Activated naive CD4-positive, alpha-beta T cell treated with anti-CD3 and anti-CD28 coated beads, Interleukin-2, amount 10 ng/mL, durations not matched to agents 7 days and 5 days (primary cell): ENCODE measurements at regions of chr7 and their contacts with region 1.

Region 1: GRCh38 chr7:26681819-26682418 is 182.5 kb downstream of the SKAP2 start:
- DNase-seq: no peak
- H3K4me3 Mint-ChIP-seq: no peak overlapping the region
- H3K27ac Mint-ChIP-seq: no peak overlapping the region
- H3K4me1 Mint-ChIP-seq: no peaks in the 10 kb centered on the region
- H3K27me3 Mint-ChIP-seq: peaks cover 6% of the 10 kb centered on the region

Region 2: GRCh38 chr7:26471306-26472075 is 210.4 kb before region 1 on chr7:
- CTCF ChIA-PET with region 1: no interaction called
- DNase-seq: no peak
- H3K4me3 Mint-ChIP-seq: no peak overlapping the region
- H3K27ac Mint-ChIP-seq: no peak overlapping the region
- H3K4me1 Mint-ChIP-seq: no peaks in the 10 kb centered on the region
- H3K27me3 Mint-ChIP-seq: peaks cover 24% of the 10 kb centered on the region

Region 3: DNA sequence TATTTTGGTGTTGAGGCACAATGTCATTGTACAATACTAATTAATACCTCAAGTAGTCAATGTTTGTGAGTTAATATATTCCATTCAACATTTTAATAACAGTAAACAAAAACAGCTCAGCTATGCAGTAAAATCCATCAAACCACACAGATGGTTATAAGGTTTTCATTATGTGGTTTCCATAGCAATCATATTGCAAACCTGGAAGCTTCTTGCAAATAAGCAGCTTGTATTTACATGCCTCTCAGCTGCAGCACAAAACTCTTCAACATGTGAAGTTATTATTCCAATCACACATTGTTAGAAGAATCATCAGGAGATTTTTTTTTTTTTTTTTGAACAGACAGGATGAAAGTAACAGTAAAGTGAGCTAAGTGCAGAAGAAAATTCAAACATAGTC is 12.2 kb after region 1 on chr7:
- CTCF ChIA-PET with region 1: interaction called, 13 read pairs
- DNase-seq: no peak
- H3K4me3 Mint-ChIP-seq: no peak overlapping the region
- H3K27ac Mint-ChIP-seq: no peak overlapping the region
- H3K4me1 Mint-ChIP-seq: no peaks in the 10 kb centered on the region
- H3K27me3 Mint-ChIP-seq: peaks cover 19% of the 10 kb centered on the region

Region 4: GRCh38 chr7:27160546-27161213 is 478.8 kb after region 1 on chr7:
- CTCF ChIA-PET with region 1: interaction called, 36 read pairs
- DNase-seq: peak; percentile 82
- H3K4me3 Mint-ChIP-seq: peak overlapping the region; percentile 60
- H3K27ac Mint-ChIP-seq: peak overlapping the region; percentile 33
- H3K4me1 Mint-ChIP-seq: peaks cover 13% of the 10 kb centered on the region
- H3K27me3 Mint-ChIP-seq: peaks cover 99% of the 10 kb centered on the region